Mammary epithelial cell (primary cell): ENCODE measurements at regions of chr11 and their contacts with region 1.

Region 1: GRCh38 chr11:86608251-86608799 is 64.1 kb downstream of the ME3 start:
- DNase-seq: peak; percentile 72
- H3K4me3 ChIP-seq: no peak overlapping the region
- H3K27ac ChIP-seq: no peak overlapping the region
- H3K4me1 ChIP-seq: peaks cover 22% of the 10 kb centered on the region
- H3K27me3 ChIP-seq: no peaks in the 10 kb centered on the region
- CTCF ChIP-seq: peak; percentile 89 to 91

Region 2: DNA sequence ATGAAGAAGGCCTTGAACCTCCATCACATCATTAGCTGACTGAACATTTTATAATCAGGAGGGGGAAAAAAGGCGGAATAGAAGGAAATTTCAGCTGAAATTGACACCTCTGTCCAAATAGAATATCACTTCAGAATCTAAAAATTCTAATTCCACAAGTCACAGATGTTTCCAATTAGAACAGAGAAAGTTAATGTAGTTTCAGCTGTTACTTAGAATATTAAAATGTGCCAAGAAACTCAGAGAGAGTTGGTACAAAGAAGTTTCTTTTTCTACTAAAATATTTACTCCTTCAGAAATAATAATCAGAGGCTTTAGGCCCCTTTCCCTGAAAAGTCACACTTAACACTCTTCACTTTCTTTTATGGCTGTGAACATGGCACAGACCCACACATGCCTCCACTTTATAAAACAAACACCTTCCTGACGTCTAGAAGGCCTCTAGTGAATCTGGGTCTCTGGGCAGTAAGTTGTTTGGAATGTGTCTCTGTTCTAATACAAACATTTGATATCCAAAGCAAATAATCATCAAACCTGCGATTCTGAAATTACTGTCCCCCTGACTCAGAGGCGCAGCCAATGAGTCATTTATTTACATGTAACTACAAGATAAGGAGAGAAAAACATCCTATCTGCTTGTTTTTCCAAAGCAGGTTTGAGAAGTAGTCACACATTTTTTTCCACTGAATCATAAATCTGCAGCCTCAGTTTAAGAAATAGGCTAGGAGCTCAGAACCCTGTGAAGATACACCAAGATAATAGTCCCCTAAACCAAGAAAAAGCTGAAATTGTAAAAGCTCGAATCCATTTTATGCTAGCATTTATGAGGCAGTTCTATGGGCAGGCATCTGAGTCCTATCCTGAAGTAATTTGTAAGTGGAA is 84.3 kb before region 1 on chr11:
- CTCF ChIA-PET with region 1: no interaction called
- dilution Hi-C with region 1: no loop called
- in situ Hi-C with region 1: no loop called
- intact Hi-C with region 1: loop called (anchors 5 kb)
- DNase-seq: peak; percentile 87
- H3K4me3 ChIP-seq: no peak overlapping the region
- H3K27ac ChIP-seq: peak overlapping the region; percentile 77
- H3K4me1 ChIP-seq: peaks cover 22% of the 10 kb centered on the region
- H3K27me3 ChIP-seq: no peaks in the 10 kb centered on the region
- CTCF ChIP-seq: no peak